ENCODE measurements at regions of chr16 and their contacts with region 1.

Region 1: GRCh38 chr16:67521095-67521804 is 7.4 kb upstream of the RIPOR1 start:
- DNase-seq: peak; percentile 99
- ATAC-seq: peak; percentile 88
- H3K4me3 Mint-ChIP-seq: peak overlapping the region; percentile 84
- H3K27ac Mint-ChIP-seq: peak overlapping the region; percentile 95
- H3K4me1 Mint-ChIP-seq: no peaks in the 10 kb centered on the region
- H3K27me3 Mint-ChIP-seq: peaks cover 88% of the 10 kb centered on the region
- CTCF ChIP-seq: peak; percentile 72

Region 2: GRCh38 chr16:67428146-67428731 is 93.0 kb before region 1 on chr16:
- CTCF ChIA-PET with region 1: interaction called, 11 read pairs
- POLR2A ChIA-PET with region 1: no interaction called
- DNase-seq: peak; percentile 91
- ATAC-seq: peak; percentile 67
- H3K4me3 Mint-ChIP-seq: no peak overlapping the region
- H3K27ac Mint-ChIP-seq: no peak overlapping the region
- H3K4me1 Mint-ChIP-seq: peaks cover 77% of the 10 kb centered on the region
- H3K27me3 Mint-ChIP-seq: peaks cover 12% of the 10 kb centered on the region
- CTCF ChIP-seq: peak; percentile 80

Region 3: DNA sequence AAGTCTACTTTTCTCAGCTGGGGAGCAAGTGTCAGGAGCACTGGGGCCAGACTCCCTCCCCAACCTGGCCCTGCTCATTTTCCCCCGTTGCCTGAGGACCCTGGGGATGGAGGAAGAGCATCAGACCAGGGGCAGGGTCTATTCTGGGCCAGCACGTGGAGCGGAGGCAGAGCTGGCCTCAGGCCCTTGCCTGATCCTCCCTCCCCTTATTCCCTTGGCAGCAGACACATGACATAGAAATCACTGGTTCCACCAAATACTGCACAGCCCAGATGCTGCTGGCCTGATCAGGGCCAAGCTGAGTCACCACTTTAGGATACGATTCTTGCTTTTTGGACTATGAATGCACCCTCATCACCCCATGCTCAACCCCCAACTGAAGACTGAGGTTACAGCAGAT is 22.1 kb before region 1 on chr16:
- CTCF ChIA-PET with region 1: interaction called, 22 read pairs
- POLR2A ChIA-PET with region 1: no interaction called
- DNase-seq: no peak
- ATAC-seq: no peak
- H3K4me3 Mint-ChIP-seq: no peak overlapping the region
- H3K27ac Mint-ChIP-seq: no peak overlapping the region
- H3K4me1 Mint-ChIP-seq: no peaks in the 10 kb centered on the region
- H3K27me3 Mint-ChIP-seq: peaks cover 86% of the 10 kb centered on the region
- CTCF ChIP-seq: no peak

Region 4: DNA sequence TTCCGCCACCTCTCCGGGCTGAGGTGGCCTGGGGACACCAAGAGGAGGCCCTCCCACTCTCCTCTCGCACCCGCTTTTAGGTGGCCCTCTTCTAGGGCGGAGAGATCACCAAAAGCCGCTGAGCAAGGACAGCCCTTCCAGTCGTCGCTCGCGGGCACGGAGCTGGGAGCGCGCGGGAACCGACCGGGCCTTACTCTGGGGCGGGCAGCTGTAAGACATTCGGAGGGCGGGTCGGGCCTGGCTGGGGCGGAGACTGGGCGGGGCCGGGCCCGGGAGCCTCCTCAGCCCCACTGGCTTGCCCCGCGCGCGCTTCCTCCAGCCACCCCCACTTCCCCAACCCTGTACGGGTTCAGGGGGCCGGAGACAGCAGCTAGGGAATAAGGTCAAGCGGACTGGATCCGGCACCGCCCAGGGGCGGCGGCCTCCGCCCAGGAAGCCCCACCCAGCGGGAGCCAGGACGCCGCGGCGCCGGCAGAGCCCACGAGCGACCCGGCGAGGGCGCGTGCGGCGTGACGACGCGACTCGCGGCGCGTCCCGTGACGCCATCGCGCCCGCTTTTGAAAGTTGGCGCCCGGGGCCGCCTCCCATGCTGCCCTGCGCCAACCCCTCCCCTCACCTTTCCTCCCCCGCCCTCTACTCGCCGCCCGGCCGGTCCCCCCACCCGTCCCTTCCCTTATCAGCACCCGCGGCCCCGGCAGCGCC is 40.7 kb after region 1 on chr16:
- CTCF ChIA-PET with region 1: interaction called, 43 read pairs
- POLR2A ChIA-PET with region 1: interaction called, 6 read pairs
- DNase-seq: peak; percentile 94
- ATAC-seq: peak; percentile 88
- H3K4me3 Mint-ChIP-seq: peak overlapping the region; percentile 83
- H3K27ac Mint-ChIP-seq: peak overlapping the region; percentile 93
- H3K4me1 Mint-ChIP-seq: peaks cover 15% of the 10 kb centered on the region
- H3K27me3 Mint-ChIP-seq: no peaks in the 10 kb centered on the region
- CTCF ChIP-seq: no peak

Region 5: DNA sequence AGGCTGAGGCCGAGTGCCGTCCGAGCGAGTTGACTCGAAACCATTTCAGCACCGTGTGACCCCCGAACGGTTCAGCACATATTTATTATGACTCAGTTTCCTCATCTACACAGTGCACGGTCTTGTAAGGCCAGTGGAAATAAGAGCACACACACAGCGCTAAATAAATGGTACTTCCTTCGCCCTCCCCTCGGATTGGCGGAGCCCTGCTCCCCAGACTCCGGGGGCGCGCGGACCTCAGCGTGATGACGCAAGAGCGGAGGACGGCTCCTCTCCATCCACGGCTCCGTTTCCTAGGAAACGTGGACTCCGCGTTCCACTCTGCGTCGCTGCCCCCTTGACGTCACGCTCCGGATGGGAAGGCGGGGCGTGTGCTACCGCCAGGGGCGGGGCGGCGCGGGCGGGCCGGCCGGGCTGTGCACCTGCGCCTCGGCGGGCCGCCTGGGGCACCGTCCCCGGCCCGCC is 139.3 kb after region 1 on chr16 and contains the start of gene PARD6A:
- CTCF ChIA-PET with region 1: interaction called, 92 read pairs
- POLR2A ChIA-PET with region 1: interaction called, 3 read pairs
- DNase-seq: peak; percentile 96
- ATAC-seq: peak; percentile 72
- H3K4me3 Mint-ChIP-seq: peak within 1 kb of the TSS; percentile 91
- H3K27ac Mint-ChIP-seq: peak within 1 kb of the TSS; percentile 98
- H3K4me1 Mint-ChIP-seq: peaks cover 19% of the 10 kb centered on the region
- H3K27me3 Mint-ChIP-seq: peaks cover 5% of the 10 kb centered on the region
- CTCF ChIP-seq: no peak
- total RNA-seq, gene PARD6A: 17.1 to 18.5 TPM (median 17.4 TPM) in 3 replicates

Region 6: DNA sequence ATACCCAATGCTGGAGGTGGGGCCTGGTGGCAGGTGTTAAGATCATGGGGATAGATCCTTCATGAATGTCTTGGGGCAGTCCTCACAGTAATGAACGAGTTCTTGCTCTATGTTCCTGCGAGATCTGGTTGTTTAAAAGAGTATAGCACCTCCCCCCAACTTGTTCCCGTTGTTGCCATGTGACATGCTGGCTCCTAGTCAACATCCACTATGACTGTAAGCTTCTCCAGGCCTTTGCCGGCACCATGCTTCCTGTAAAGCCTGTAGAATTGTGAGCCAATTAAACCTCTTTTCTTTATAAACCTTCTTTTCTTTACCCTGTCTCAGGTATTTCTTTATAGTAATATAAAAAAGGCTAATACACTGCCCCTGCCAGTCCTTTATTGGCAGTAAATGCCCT is 251.8 kb after region 1 on chr16:
- CTCF ChIA-PET with region 1: no interaction called
- POLR2A ChIA-PET with region 1: no interaction called
- DNase-seq: no peak
- ATAC-seq: no peak
- H3K4me3 Mint-ChIP-seq: no peak overlapping the region
- H3K27ac Mint-ChIP-seq: peak overlapping the region; percentile 65; the same call in 1 of the 2 replicates
- H3K4me1 Mint-ChIP-seq: no peaks in the 10 kb centered on the region
- H3K27me3 Mint-ChIP-seq: no peaks in the 10 kb centered on the region
- CTCF ChIP-seq: no peak

Region 7: GRCh38 chr16:67935402-67936123 is 414.3 kb after region 1 on chr16:
- CTCF ChIA-PET with region 1: interaction called, 10 read pairs
- POLR2A ChIA-PET with region 1: no interaction called
- DNase-seq: peak; percentile 98
- ATAC-seq: peak; percentile 92
- H3K4me3 Mint-ChIP-seq: peak overlapping the region; percentile 100
- H3K27ac Mint-ChIP-seq: peak overlapping the region; percentile 100
- H3K4me1 Mint-ChIP-seq: peaks cover 23% of the 10 kb centered on the region
- H3K27me3 Mint-ChIP-seq: no peaks in the 10 kb centered on the region
- CTCF ChIP-seq: no peak